MCF 10A (cell line): ENCODE measurements at regions of chr9 and their contacts with region 1.

Region 1: GRCh38 chr9:91328186-91328585 is 33.5 kb downstream of the AUH start:
- DNase-seq: no peak
- H3K4me3 Mint-ChIP-seq: no peak overlapping the region
- H3K27ac Mint-ChIP-seq: no peak overlapping the region
- H3K4me1 Mint-ChIP-seq: no peaks in the 10 kb centered on the region
- H3K27me3 Mint-ChIP-seq: no peaks in the 10 kb centered on the region
- CTCF ChIP-seq: no peak

Region 2: DNA sequence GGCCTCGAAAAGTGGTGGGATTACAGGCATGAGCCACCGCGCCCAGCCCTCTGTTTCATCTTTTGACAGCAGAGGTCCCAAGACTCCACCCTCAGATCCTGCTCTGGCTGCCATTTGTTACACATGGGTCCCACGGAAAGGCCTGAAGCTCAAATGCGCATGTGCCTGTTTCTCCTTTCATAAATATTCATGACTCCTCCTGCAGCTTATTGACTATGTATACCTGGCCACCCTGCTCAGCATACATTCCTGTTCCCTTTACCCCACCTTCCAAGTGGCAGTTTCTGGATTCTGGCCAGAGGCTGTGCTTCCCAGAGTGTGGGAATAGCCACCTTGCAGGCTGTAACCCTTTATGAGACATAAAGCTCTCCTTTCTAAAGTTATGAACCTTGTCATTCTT is 13.0 kb before region 1 on chr9:
- CTCF ChIA-PET with region 1: interaction called, 13 read pairs
- POLR2A ChIA-PET with region 1: interaction called, 4 read pairs
- intact Hi-C with region 1: no loop called
- DNase-seq: no peak
- H3K4me3 Mint-ChIP-seq: no peak overlapping the region
- H3K27ac Mint-ChIP-seq: no peak overlapping the region
- H3K4me1 Mint-ChIP-seq: peaks cover 5% of the 10 kb centered on the region
- H3K27me3 Mint-ChIP-seq: no peaks in the 10 kb centered on the region
- CTCF ChIP-seq: no peak